Activated CD8-positive, alpha-beta memory T cell treated with anti-CD3 and anti-CD28 coated beads, Interleukin-2, amount 10 ng/mL, durations not matched to agents 7 days and 5 days (primary cell): ENCODE measurements at regions of chr11 and their contacts with region 1.

Region 1: DNA sequence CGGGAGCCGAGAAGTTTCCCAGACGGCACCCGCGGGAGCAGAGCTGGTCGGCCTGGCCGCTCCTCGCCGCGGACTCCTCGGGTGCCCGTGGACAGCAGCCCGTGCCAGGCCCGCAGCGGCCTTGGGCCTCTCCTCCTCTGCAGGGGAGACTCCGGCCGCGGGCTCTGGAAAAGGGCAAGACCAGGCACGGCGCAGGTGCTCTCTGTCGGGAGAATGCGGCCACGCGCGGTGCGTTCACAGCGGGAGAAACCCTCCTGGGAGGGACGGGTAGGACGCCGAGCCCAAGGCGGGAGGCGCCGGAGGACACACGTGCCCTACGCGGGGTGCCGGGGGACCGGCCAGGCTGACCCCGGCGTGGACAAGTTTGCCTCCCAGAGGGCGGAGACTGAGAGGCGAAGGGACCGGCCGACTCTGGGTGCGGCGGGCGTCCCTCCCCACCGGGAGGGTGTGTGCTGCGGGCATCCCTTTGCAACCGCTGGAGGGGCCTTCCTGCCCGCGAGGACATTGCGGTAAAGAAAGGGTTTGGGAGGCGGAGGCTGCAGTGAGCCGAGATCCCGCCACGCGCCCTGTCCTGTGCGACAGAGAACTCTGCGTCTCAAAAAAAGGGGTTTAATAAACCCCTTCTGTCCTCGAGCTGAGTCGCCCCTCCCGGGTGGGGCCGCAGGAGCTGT is 2.3 kb downstream of the IFITM1 start:
- DNase-seq: peak; percentile 77
- ATAC-seq: no peak
- H3K4me3 Mint-ChIP-seq: peak overlapping the region; percentile 97
- H3K27ac Mint-ChIP-seq: peak overlapping the region; percentile 91
- H3K4me1 Mint-ChIP-seq: peaks cover 46% of the 10 kb centered on the region
- H3K27me3 Mint-ChIP-seq: no peaks in the 10 kb centered on the region

Region 2: GRCh38 chr11:295351-296170 is 20.6 kb before region 1 on chr11:
- CTCF ChIA-PET with region 1: no interaction called
- DNase-seq: no peak
- ATAC-seq: no peak
- H3K4me3 Mint-ChIP-seq: no peak overlapping the region
- H3K27ac Mint-ChIP-seq: no peak overlapping the region
- H3K4me1 Mint-ChIP-seq: peaks cover 45% of the 10 kb centered on the region
- H3K27me3 Mint-ChIP-seq: peaks cover 7% of the 10 kb centered on the region

Region 3: DNA sequence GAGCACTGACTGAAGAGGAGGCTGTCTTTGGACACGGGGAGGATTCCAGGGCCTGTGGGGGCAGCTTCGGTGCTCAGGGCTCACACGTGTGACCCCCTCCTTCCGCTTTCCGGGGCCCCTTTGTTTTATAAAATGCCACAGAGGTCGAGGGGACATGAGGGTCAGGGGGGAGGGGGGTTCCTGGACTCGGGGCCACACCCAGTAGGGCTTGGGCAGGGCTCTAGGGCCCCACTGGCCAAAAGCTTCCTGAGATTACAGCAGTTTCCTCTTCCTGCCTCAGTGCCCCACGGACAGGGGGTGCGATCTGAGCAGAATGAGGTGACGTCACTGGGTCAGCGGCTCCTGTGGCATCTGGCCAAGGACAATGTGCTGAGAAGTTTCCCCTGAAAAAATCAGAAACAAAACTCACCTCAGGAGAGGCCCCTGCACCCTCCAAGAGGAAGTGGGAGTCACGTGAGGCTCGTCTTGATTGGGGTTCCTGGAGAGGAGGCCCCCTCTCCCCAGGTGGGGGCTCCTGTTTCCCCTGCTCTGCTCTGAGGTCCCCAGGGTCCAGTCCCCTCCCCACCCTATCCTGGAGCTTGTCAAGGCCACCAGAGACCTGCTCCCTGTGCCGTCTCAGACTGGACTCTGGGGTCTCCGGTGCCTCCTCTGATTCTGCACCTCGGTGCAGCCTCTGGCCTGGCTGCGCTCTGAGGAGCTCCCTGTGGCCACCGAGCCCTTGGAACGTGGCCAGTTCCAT is 10.8 kb after region 1 on chr11:
- CTCF ChIA-PET with region 1: interaction called, 12 read pairs
- DNase-seq: peak; percentile 90
- ATAC-seq: peak; percentile 67
- H3K4me3 Mint-ChIP-seq: peak overlapping the region; percentile 63
- H3K27ac Mint-ChIP-seq: peak overlapping the region; percentile 97
- H3K4me1 Mint-ChIP-seq: peaks cover 68% of the 10 kb centered on the region
- H3K27me3 Mint-ChIP-seq: peaks cover 5% of the 10 kb centered on the region

Region 4: DNA sequence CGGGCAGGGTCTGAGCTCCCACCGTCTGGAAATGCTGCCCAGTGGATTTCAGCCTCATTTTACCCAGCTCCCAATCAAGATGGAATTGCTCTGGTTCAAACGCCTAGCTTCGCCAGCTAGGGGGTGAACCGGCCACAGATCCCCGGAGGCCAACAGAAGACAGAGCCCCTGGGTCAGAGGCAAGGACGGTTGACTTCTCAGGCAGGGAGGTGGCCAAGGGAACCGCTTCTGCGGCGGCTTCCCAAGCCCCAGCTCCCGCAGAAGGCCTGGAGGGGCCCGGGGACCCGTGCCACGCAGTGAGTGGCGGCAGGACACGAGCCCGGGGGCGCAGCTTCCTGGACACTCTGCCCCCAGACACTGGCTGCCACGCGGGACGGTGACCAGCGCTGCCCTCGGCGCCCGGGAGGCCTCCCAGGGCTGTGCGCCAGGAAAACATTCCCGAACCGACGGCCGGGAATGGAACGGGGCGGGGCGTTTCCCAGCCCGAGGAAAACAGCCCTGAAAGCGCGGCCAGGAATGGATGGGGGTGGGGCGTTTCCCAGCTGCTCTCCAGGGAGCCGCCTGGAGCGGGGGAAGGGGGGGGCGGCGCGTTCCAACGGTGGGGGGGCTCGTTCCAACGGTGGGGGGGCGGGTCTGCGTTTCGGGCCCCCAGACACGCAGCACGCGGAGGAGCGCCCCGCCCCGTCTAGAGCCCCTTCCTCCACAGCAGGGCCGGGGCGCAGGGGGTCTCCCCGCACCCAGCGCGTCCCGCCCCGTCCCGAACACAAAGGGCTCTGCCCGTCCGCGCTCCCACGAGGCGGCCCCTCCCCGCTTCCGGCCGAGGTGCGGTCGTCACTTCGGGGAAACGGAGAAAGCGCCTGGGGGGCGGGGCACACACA is 39.7 kb after region 1 on chr11:
- CTCF ChIA-PET with region 1: interaction called, 17 read pairs
- DNase-seq: peak; percentile 88
- ATAC-seq: peak; percentile 70
- H3K4me3 Mint-ChIP-seq: peak overlapping the region; percentile 64
- H3K27ac Mint-ChIP-seq: peak overlapping the region; percentile 65
- H3K4me1 Mint-ChIP-seq: peaks cover 36% of the 10 kb centered on the region
- H3K27me3 Mint-ChIP-seq: peaks cover 30% of the 10 kb centered on the region